ENCODE measurements at regions of chr1 and their contacts with region 1.

Region 1: GRCh38 chr1:239197871-239198270 is 188.5 kb upstream of the CHRM3 start:
- DNase-seq: no peak
- ATAC-seq: no peak
- H3K4me3 ChIP-seq: no peak overlapping the region
- H3K27ac ChIP-seq: no peak overlapping the region
- H3K4me1 ChIP-seq: no peaks in the 10 kb centered on the region
- H3K27me3 ChIP-seq: no peaks in the 10 kb centered on the region
- CTCF ChIP-seq: no peak
- POLR2A ChIP-seq: no peak
- RAD21 ChIP-seq: no peak

Region 2: GRCh38 chr1:239212811-239213220 is 14.9 kb after region 1 on chr1:
- CTCF ChIA-PET with region 1: no interaction called
- POLR2A ChIA-PET with region 1: no interaction called
- RAD21 ChIA-PET with region 1: no interaction called
- intact Hi-C with region 1: loop called (anchors 1 kb)
- DNase-seq: no peak
- ATAC-seq: no peak
- H3K4me3 ChIP-seq: no peak overlapping the region
- H3K27ac ChIP-seq: no peak overlapping the region
- H3K4me1 ChIP-seq: no peaks in the 10 kb centered on the region
- H3K27me3 ChIP-seq: no peaks in the 10 kb centered on the region
- CTCF ChIP-seq: no peak
- POLR2A ChIP-seq: no peak
- RAD21 ChIP-seq: no peak

Measured in HCT116 (cell line).